MCF 10A (cell line): ENCODE measurements at regions of chr3 and their contacts with region 1.

Region 1: DNA sequence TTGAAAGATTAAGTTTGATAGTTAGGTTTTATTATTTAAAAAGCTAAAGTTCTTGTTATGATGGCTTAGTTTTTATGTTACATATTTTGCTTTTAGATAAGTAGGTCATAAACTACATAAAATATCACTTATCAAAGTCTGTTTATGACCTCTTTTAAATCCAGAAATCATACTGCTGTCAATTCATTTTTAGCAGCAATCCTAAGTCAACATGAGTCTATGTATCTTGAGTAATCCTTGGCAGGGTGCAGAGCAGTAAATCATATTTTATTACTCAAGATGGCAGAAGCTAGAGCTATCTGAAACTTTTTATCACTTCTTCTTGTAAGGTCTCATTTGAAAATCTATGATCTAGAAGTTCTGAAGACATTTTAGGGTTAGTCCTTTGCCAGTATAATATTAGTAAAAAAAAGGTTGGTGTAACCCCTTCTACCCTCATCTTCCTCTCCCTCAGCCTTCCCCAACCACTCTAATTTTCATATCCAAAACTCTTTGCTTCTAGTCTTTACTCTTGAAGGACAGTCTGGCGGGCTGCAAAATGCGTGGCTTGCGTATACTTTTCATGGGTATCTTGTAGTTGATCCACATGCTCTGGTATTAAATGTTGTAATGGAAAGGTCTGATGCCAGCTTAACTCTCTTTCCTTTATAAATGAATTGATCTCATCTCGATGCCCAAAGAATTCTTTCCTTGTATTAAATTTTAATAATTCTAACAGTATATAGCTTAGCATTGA is 134.0 kb upstream of the THRB start:
- DNase-seq: peak; percentile 56
- H3K4me3 Mint-ChIP-seq: no peak overlapping the region
- H3K27ac Mint-ChIP-seq: no peak overlapping the region
- H3K4me1 Mint-ChIP-seq: peaks cover 6% of the 10 kb centered on the region
- H3K27me3 Mint-ChIP-seq: no peaks in the 10 kb centered on the region
- CTCF ChIP-seq: no peak

Region 2: DNA sequence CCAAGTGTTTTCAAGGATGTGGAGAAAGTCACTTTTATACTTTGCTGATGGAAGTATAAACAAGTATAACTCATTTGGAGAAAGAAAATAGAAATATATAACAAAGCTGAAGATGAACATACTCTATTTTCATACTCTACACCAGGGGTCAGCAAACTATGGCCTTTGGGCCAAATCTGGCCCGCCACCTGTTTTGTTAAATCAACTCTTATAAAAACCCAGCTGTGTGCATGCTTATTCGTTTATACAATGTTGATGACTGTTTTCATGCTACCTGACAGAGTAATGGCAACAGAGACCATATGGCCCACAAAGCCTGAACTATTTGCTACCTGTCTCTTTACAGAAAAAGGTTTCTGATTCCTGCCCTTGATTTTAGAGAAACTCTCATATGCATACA is 559.6 kb before region 1 on chr3:
- CTCF ChIA-PET with region 1: no interaction called
- POLR2A ChIA-PET with region 1: no interaction called
- intact Hi-C with region 1: no loop called
- DNase-seq: peak; percentile 36
- H3K4me3 Mint-ChIP-seq: no peak overlapping the region
- H3K27ac Mint-ChIP-seq: no peak overlapping the region
- H3K4me1 Mint-ChIP-seq: peaks cover 10% of the 10 kb centered on the region
- H3K27me3 Mint-ChIP-seq: no peaks in the 10 kb centered on the region
- CTCF ChIP-seq: peak; percentile 28

Region 3: GRCh38 chr3:24508423-24508839 is 120.3 kb before region 1 on chr3:
- CTCF ChIA-PET with region 1: no interaction called
- POLR2A ChIA-PET with region 1: no interaction called
- intact Hi-C with region 1: no loop called
- DNase-seq: peak; percentile 64
- H3K4me3 Mint-ChIP-seq: no peak overlapping the region
- H3K27ac Mint-ChIP-seq: peak overlapping the region; percentile 50
- H3K4me1 Mint-ChIP-seq: peaks cover 13% of the 10 kb centered on the region
- H3K27me3 Mint-ChIP-seq: no peaks in the 10 kb centered on the region
- CTCF ChIP-seq: no peak

Region 4: DNA sequence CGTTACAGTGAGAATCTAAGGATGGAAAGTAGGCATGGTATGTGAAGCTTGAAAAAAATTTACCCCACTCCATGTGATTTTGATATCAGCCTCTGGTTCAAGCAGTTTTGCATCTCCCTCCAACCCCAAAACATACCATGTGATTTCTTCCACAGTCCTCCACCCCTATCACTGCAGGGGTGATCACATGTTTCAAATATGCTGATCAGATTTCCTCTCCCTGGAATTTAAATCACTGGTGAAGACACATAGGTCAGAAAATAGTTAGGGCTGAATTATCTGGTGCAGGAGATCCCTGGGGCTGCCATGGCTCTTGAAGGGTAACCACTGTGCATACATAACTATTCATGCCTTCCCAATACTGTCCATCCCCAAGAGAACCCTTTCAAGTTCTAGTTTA is 14.3 kb before region 1 on chr3:
- CTCF ChIA-PET with region 1: interaction called, 4 read pairs
- POLR2A ChIA-PET with region 1: interaction called, 10 read pairs
- intact Hi-C with region 1: no loop called
- DNase-seq: no peak
- H3K4me3 Mint-ChIP-seq: no peak overlapping the region
- H3K27ac Mint-ChIP-seq: no peak overlapping the region
- H3K4me1 Mint-ChIP-seq: no peaks in the 10 kb centered on the region
- H3K27me3 Mint-ChIP-seq: no peaks in the 10 kb centered on the region
- CTCF ChIP-seq: no peak